ENCODE measurements at regions of chr12 and their contacts with region 1.

Region 1: GRCh38 chr12:119444456-119445044 is 110.0 kb downstream of the CCDC60 start:
- DNase-seq: peak; percentile 72
- H3K4me3 Mint-ChIP-seq: no peak overlapping the region
- H3K27ac Mint-ChIP-seq: no peak overlapping the region
- H3K4me1 Mint-ChIP-seq: no peaks in the 10 kb centered on the region
- H3K27me3 Mint-ChIP-seq: peaks cover 13% of the 10 kb centered on the region

Region 2: GRCh38 chr12:119432949-119433348 is 11.6 kb before region 1 on chr12:
- CTCF ChIA-PET with region 1: interaction called, 48 read pairs
- intact Hi-C with region 1: no loop called
- DNase-seq: no peak
- H3K4me3 Mint-ChIP-seq: no peak overlapping the region
- H3K27ac Mint-ChIP-seq: no peak overlapping the region
- H3K4me1 Mint-ChIP-seq: no peaks in the 10 kb centered on the region
- H3K27me3 Mint-ChIP-seq: peaks cover 7% of the 10 kb centered on the region

Region 3: GRCh38 chr12:119544765-119545625 is 100.4 kb after region 1 on chr12:
- CTCF ChIA-PET with region 1: interaction called, 100 read pairs
- intact Hi-C with region 1: loop called (anchors 1 kb)
- DNase-seq: peak; percentile 73
- H3K4me3 Mint-ChIP-seq: no peak overlapping the region
- H3K27ac Mint-ChIP-seq: no peak overlapping the region
- H3K4me1 Mint-ChIP-seq: no peaks in the 10 kb centered on the region
- H3K27me3 Mint-ChIP-seq: peaks cover 28% of the 10 kb centered on the region

Region 4: GRCh38 chr12:119649202-119649808 is 204.8 kb after region 1 on chr12:
- CTCF ChIA-PET with region 1: interaction called, 9 read pairs
- intact Hi-C with region 1: loop called (anchors 1 kb)
- DNase-seq: no peak
- H3K4me3 Mint-ChIP-seq: no peak overlapping the region
- H3K27ac Mint-ChIP-seq: no peak overlapping the region
- H3K4me1 Mint-ChIP-seq: no peaks in the 10 kb centered on the region
- H3K27me3 Mint-ChIP-seq: no peaks in the 10 kb centered on the region

Region 5: GRCh38 chr12:119659289-119659897 is 214.8 kb after region 1 on chr12:
- CTCF ChIA-PET with region 1: interaction called, 5 read pairs
- intact Hi-C with region 1: loop called (anchors 1 kb)
- DNase-seq: peak; percentile 69
- H3K4me3 Mint-ChIP-seq: no peak overlapping the region
- H3K27ac Mint-ChIP-seq: no peak overlapping the region
- H3K4me1 Mint-ChIP-seq: no peaks in the 10 kb centered on the region
- H3K27me3 Mint-ChIP-seq: no peaks in the 10 kb centered on the region

Region 6: DNA sequence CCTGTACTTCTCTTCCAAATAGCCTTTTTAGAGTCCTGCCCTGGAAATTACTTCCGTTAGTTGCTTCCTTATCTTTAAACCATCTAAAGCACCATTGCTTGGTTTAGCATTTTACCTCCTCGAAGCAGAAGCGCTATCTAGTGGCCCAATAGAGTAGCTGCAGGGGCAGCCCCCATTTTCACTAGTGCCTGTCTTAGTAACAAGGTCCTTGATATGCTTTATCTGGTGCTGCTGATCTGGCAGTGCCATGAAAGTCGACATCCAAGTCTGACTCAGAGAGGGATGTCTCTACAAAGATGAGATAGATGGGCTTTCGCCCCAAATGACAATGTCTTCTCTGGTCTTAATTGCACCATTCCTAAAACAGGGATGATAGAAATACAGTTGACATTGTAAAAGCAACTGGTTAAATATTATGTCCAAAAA is 457.5 kb after region 1 on chr12:
- CTCF ChIA-PET with region 1: no interaction called
- intact Hi-C with region 1: loop called (anchors 1 kb)
- DNase-seq: peak; percentile 89
- H3K4me3 Mint-ChIP-seq: no peak overlapping the region
- H3K27ac Mint-ChIP-seq: no peak overlapping the region
- H3K4me1 Mint-ChIP-seq: peaks cover 8% of the 10 kb centered on the region
- H3K27me3 Mint-ChIP-seq: no peaks in the 10 kb centered on the region